Common myeloid progenitor, CD34-positive (primary cell): ENCODE measurements at regions of chr17 and their contacts with region 1.

Region 1: DNA sequence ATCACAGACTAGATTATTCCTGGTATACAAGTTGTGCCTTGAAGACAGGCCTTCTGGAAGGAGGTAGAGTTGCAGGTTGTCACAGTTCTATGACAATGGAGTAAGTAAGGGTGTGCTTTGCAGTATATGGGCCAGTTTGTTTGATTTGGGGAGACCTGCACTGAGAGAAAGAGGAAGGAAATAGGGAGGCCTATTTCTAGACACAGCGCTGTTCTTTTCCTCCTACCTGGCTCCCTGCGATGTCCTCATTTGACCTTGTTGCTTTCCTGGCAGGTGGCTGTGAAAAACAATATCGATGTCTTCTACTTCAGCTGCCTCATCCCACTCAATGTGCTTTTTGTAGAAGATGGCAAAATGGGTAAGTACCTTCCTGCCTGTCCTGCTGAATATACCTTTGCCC is 22.5 kb upstream of the RASL10B start:
- DNase-seq: peak in 2 of 3 donors; percentile 25 to 42
- H3K4me3 ChIP-seq: peak overlapping the region in 1 of 7 experiments; percentile 15
- H3K27ac ChIP-seq: no peak overlapping the region
- H3K4me1 ChIP-seq: peaks cover 7 to 25% (median 14%) of the 10 kb centered on the region in 4 experiments
- H3K27me3 ChIP-seq: no peaks in the 10 kb centered on the region

Region 2: GRCh38 chr17:35587074-35587971 is 121.6 kb before region 1 on chr17 and contains the start of gene AP2B1:
- CTCF ChIA-PET with region 1: no interaction called
- POLR2A ChIA-PET with region 1: no interaction called
- DNase-seq: peak; percentile 98 to 99 (median 99)
- H3K4me3 ChIP-seq: peak within 1 kb of the TSS; percentile 78 to 100 (median 90)
- H3K27ac ChIP-seq: peak within 1 kb of the TSS; percentile 88 to 98
- H3K4me1 ChIP-seq: peaks cover 13 to 25% (median 16%) of the 10 kb centered on the region in 4 experiments
- H3K27me3 ChIP-seq: no peaks in the 10 kb centered on the region

Region 3: DNA sequence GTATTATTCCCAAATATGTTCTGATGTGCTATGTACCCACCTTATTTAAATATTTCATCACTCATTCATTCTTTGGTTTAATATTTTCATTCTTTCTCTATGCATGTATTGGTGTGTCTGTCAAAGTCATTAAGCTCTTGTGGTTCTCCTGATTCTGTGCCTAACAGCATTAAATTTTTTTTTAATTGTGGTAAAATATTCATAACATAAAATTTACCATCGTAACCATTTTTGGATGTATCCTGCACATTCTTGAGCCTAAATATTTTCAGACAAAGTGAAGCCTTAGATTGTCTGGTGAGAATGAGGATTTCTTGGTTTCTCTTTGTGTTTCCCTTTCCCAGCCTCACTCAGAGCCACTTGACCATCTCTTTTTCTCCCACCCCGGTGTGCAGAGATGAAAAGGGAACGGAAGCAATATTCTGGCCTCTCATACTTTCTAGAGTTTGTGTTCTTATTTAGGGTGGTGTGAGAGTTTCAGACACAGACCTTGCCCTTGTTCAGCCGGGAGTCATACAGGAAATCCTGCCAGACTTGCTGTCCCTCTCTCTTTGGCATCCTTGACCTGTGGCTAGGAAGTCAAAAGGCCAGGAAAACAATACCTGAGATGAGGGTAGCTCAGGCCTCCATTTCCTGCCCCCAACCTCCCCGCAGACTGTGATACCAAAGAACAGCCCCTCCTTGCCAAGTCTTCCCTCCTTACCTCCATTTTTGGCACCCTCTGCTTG is 166.3 kb after region 1 on chr17:
- CTCF ChIA-PET with region 1: no interaction called
- POLR2A ChIA-PET with region 1: interaction called, 10 read pairs
- DNase-seq: peak in 1 of 3 donors; percentile 46
- H3K4me3 ChIP-seq: peak overlapping the region in 1 of 7 experiments; percentile 50
- H3K27ac ChIP-seq: no peak overlapping the region
- H3K4me1 ChIP-seq: peaks cover 0 to 20% (median 14%) of the 10 kb centered on the region in 4 experiments
- H3K27me3 ChIP-seq: no peaks in the 10 kb centered on the region